CD4-positive, alpha-beta memory T cell (primary cell): ENCODE measurements at regions of chr11 and their contacts with region 1.

Region 1: DNA sequence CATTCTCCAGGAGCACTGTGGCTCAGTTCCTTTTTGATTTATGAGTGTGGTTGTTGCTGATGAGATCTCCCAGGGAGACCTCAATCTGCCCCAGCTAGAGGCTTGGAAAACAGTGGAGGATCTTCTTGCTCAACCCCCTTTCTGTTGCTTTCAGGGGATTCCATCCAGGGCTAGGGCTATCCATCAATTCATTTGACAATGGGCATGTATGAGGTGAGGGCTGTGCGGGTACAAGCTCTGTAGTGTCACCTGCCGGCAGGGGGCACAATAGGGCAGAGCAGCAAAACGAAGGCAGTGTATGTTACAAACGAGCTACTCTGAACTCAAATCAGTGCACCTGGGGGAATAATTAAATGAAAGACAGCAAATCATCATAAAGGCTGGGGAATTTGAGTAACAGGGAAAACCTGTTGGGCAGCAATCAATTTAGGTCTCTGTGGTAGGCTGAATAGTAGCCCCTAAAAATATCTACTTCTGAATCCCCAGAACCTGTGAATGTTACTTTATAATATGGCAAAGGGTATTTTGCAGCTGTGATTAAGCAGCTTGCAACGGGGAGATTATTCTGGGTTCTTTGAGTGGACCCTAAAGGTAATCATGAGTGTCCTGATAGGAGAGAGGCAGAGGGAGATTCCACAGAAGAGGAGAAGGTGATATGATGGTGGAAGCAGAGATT is 170.3 kb upstream of the ZBED5 start:
- DNase-seq: peak; percentile 60 to 76 (median 65)
- H3K4me3 ChIP-seq: no peak overlapping the region
- H3K4me3 Mint-ChIP-seq: no peak overlapping the region
- H3K27ac ChIP-seq: no peak overlapping the region
- H3K27ac Mint-ChIP-seq: no peak overlapping the region
- H3K4me1 ChIP-seq: no peaks in the 10 kb centered on the region
- H3K4me1 Mint-ChIP-seq: peaks cover 0 to 2% (median 0%) of the 10 kb centered on the region in 4 donors
- H3K27me3 ChIP-seq: no peaks in the 10 kb centered on the region
- H3K27me3 Mint-ChIP-seq: peaks cover 0 to 2% of the 10 kb centered on the region in 2 donors

Region 2: DNA sequence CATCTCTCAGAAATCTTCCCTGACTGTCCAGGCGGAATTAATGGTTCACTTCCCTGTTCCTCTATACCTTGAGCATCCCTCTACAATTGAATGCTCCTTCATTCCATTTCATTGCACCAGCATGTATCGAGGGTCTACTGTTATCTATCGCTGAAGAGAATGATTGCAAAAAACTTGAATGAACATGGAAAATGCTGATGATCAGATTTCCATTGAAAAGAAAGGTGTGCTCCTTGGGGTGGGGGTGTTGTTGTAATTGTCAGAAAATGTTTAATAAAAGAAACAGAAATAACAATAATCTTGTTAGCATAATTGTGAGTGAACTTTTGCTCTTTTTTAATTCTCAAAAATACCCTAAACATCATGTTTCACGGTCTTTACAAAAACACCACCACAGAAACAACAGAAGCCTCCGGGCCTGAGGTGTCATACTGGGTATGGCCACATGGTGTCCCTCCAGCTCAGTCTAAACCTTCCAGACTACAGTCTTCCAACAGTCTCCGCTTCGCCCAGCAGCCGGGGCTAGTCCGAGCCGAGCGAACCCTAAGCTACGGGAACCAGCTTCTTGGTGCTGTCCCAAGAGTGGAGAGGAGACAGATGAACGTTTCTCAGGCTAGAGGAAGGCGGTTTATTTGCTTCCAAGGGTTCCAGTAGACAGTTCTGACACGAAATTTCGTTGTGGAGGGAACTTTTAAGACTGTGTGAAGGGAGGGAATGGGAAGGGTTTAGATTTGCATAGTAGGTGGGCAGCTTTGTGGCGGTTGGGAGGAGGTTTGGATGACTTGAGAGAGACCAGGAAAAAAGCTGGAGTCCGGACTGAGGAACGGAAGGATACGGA is 94.5 kb before region 1 on chr11:
- CTCF ChIA-PET with region 1: interaction called, 123 read pairs
- POLR2A ChIA-PET with region 1: no interaction called
- intact Hi-C with region 1: no loop called
- DNase-seq: peak; percentile 70 to 80 (median 74)
- H3K4me3 ChIP-seq: peak overlapping the region; percentile 21 to 33
- H3K4me3 Mint-ChIP-seq: peak overlapping the region; percentile 85 to 94 (median 90)
- H3K27ac ChIP-seq: no peak overlapping the region
- H3K27ac Mint-ChIP-seq: peak overlapping the region in 5 of 7 donors; percentile 11 to 86 (median 57)
- H3K4me1 ChIP-seq: peaks cover 20% of the 10 kb centered on the region
- H3K4me1 Mint-ChIP-seq: peaks cover 5 to 21% (median 12%) of the 10 kb centered on the region in 4 donors
- H3K27me3 ChIP-seq: peaks cover 23% of the 10 kb centered on the region
- H3K27me3 Mint-ChIP-seq: peaks cover 11 to 26% of the 10 kb centered on the region in 2 donors

Region 3: DNA sequence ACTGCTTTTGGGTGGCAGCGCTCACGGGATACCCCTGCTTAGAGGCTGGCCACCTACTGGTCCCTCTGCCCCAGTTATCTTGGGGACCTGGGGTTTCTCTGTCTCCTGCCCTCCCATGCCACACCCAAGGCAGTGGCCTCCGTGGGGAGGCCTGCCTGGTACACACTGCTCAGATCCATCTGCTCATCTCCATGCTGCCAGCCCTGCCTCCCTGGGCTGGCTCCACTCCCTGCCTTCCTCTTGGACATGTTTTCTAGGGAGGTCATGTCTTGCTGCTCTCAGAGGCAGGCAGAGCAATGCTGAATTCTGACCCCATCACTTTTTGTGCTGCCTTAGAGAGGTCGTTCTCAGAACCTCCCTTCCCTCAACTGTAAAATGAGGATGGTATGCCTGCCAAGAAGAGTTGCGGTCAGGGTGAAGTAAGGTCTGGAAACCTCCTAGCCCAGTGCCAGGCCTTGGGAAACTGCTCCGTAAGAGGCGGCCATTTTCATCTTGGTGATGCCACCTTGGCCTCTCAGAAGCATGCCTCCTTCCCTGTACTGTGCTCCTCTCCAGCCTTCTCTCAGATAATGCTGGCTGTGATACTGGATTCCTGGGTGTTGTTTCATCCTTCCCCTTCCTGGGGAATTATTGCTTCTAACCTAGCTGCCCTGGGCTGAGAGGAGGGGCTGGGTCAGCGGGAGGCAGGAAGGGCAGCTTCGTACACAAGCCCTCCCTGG is 16.1 kb after region 1 on chr11:
- CTCF ChIA-PET with region 1: interaction called, 91 read pairs
- POLR2A ChIA-PET with region 1: no interaction called
- intact Hi-C with region 1: no loop called
- DNase-seq: no peak
- H3K4me3 ChIP-seq: no peak overlapping the region
- H3K4me3 Mint-ChIP-seq: no peak overlapping the region
- H3K27ac ChIP-seq: no peak overlapping the region
- H3K27ac Mint-ChIP-seq: no peak overlapping the region
- H3K4me1 ChIP-seq: no peaks in the 10 kb centered on the region
- H3K4me1 Mint-ChIP-seq: peaks cover 0 to 2% (median 0%) of the 10 kb centered on the region in 4 donors
- H3K27me3 ChIP-seq: no peaks in the 10 kb centered on the region
- H3K27me3 Mint-ChIP-seq: no peaks in the 10 kb centered on the region

Region 4: DNA sequence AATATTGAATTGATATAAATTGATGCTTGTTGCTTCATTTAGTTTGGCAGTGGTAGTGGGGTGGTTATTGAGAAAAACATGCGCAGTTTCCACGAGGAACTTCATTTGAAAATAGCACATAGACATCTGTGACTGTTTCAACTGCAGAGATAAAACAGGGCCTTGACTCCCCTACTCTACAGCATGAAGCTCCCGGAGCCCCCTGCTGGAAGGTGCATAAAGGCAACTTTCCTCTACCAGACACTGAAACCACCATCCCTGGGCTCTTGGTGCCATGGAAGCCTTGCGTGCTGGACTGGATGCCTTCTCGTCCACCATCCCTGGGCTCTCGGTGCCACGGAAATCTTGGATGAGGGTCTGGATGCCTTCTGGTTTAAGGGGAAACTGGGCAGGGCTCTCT is 129.0 kb after region 1 on chr11:
- CTCF ChIA-PET with region 1: interaction called, 339 read pairs
- POLR2A ChIA-PET with region 1: interaction called, 13 read pairs
- intact Hi-C with region 1: loop called (anchors 1 kb)
- DNase-seq: peak; percentile 46 to 66 (median 60)
- H3K4me3 ChIP-seq: no peak overlapping the region
- H3K4me3 Mint-ChIP-seq: peak overlapping the region in 4 of 8 donors; percentile 51 to 88 (median 86)
- H3K27ac ChIP-seq: no peak overlapping the region
- H3K27ac Mint-ChIP-seq: peak overlapping the region in 5 of 7 donors; percentile 87 to 94 (median 89)
- H3K4me1 ChIP-seq: peaks cover 35% of the 10 kb centered on the region
- H3K4me1 Mint-ChIP-seq: peaks cover 21 to 49% (median 30%) of the 10 kb centered on the region in 4 donors
- H3K27me3 ChIP-seq: no peaks in the 10 kb centered on the region
- H3K27me3 Mint-ChIP-seq: no peaks in the 10 kb centered on the region

Region 5: GRCh38 chr11:11519184-11519583 is 491.0 kb after region 1 on chr11:
- CTCF ChIA-PET with region 1: no interaction called
- POLR2A ChIA-PET with region 1: no interaction called
- intact Hi-C with region 1: no loop called
- DNase-seq: no peak
- H3K4me3 ChIP-seq: no peak overlapping the region
- H3K4me3 Mint-ChIP-seq: no peak overlapping the region
- H3K27ac ChIP-seq: no peak overlapping the region
- H3K27ac Mint-ChIP-seq: no peak overlapping the region
- H3K4me1 ChIP-seq: no peaks in the 10 kb centered on the region
- H3K4me1 Mint-ChIP-seq: no peaks in the 10 kb centered on the region
- H3K27me3 ChIP-seq: no peaks in the 10 kb centered on the region
- H3K27me3 Mint-ChIP-seq: peaks cover 0 to 2% of the 10 kb centered on the region in 2 donors

Region 6: GRCh38 chr11:11793073-11793472 is 764.9 kb after region 1 on chr11:
- CTCF ChIA-PET with region 1: interaction called, 158 read pairs
- POLR2A ChIA-PET with region 1: interaction called, 5 read pairs
- intact Hi-C with region 1: no loop called
- DNase-seq: no peak
- H3K4me3 ChIP-seq: no peak overlapping the region
- H3K4me3 Mint-ChIP-seq: no peak overlapping the region
- H3K27ac ChIP-seq: no peak overlapping the region
- H3K27ac Mint-ChIP-seq: no peak overlapping the region
- H3K4me1 ChIP-seq: no peaks in the 10 kb centered on the region
- H3K4me1 Mint-ChIP-seq: no peaks in the 10 kb centered on the region
- H3K27me3 ChIP-seq: no peaks in the 10 kb centered on the region
- H3K27me3 Mint-ChIP-seq: peaks cover 16 to 17% of the 10 kb centered on the region in 2 donors